ENCODE measurements at regions of chr10 and their contacts with region 1.

Region 1: GRCh38 chr10:34815185-34816084 is at the start of gene PARD3:
- DNase-seq: peak; percentile 54
- H3K4me3 ChIP-seq: peak within 1 kb of the TSS; percentile 53 to 92 (median 65)
- H3K27ac ChIP-seq: peak within 1 kb of the TSS; percentile 50
- H3K4me1 ChIP-seq: peaks cover 14% of the 10 kb centered on the region
- H3K27me3 ChIP-seq: peaks cover 3 to 6% of the 10 kb centered on the region in 2 experiments
- CTCF ChIP-seq: no peak
- POLR2A ChIP-seq: no peak
- total RNA-seq, gene PARD3: 20.2 and 24.1 TPM in 2 replicates

Region 2: DNA sequence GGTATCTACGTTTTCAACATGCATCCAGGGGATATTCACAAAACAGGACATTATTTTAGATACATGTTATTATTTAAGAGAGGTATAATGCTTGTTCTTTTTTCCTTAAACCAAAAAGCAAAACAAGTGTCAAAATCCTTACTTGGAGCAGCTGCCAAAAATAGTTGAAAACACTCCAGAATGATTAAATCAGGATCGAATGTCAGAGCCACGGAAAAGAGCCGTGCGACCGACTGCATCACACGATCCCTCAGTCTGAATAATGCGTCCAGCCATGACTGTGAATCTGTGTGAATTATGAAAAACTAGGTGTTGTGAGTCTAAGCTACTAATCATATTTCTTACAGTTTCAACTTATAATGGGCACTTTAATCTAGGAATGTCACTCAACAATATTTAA is 126.4 kb before region 1 on chr10:
- CTCF ChIA-PET with region 1: no interaction called
- POLR2A ChIA-PET with region 1: no interaction called
- dilution Hi-C with region 1: no loop called
- intact Hi-C with region 1: loop called (anchors 1 kb)
- DNase-seq: peak; percentile 44
- H3K4me3 ChIP-seq: no peak overlapping the region
- H3K27ac ChIP-seq: no peak overlapping the region
- H3K4me1 ChIP-seq: no peaks in the 10 kb centered on the region
- H3K27me3 ChIP-seq: no peaks in the 10 kb centered on the region
- CTCF ChIP-seq: no peak
- POLR2A ChIP-seq: no peak

Region 3: DNA sequence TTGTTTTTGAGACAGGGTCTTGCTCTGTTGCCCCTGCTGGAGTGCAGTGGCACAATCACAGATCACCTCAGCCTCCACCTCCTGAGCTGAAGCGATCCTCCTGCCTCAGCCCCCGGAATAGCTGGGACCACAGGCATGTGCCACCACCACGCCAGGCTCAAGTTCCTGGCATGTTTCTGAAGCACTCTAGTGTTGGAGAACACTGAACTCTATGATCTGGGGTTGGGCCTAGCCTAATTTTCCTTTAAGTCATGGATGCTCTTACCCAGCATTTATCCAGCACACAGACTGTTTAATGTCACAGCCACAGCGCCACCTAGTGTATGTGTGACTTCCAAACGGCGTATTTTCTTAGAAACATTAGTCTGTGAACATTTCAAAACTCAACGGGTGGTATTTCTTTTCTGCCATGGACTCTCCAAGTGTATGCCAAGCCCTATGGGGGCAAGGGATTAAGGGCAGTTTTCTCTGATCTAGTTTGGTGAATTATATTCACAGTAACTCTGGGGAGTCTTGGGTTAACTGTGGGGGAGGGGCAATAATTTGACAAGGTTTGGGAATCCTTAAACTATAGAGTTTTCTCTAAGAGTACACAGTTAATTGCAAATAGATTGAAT is 403.0 kb after region 1 on chr10:
- CTCF ChIA-PET with region 1: no interaction called
- POLR2A ChIA-PET with region 1: no interaction called
- dilution Hi-C with region 1: no loop called
- intact Hi-C with region 1: loop called (anchors 10 kb)
- DNase-seq: peak; percentile 86
- H3K4me3 ChIP-seq: no peak overlapping the region
- H3K27ac ChIP-seq: no peak overlapping the region
- H3K4me1 ChIP-seq: peaks cover 3% of the 10 kb centered on the region
- H3K27me3 ChIP-seq: no peaks in the 10 kb centered on the region
- CTCF ChIP-seq: peak; percentile 62 to 80
- POLR2A ChIP-seq: no peak